Activated naive CD4-positive, alpha-beta T cell treated with anti-CD3 and anti-CD28 coated beads for 36 hours (primary cell): ENCODE measurements at regions of chr2 and their contacts with region 1.

Region 1: DNA sequence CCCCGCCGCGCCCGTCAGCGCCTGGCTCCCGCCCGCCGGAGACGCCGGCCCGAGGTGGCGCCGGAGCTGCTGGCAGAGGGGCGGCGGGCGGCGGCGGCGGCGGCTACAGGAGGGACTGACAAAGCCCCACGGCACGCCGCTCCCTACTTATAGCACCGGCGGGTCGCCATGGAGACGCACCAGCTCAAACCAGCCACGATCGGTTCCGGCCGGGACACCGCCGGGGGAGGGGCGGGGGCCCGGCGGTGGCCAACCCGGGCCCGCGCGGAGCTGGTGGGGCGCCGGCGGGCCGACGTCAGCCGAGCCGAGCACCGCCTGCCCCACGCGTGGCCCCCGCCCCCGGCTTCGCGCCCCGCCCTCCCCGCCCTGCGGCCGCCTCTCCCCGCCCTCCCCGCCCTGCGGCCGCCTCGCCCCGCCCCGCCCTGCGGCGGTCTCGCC is at the start of gene ODC1:
- DNase-seq: peak; percentile 89
- H3K4me3 Mint-ChIP-seq: peak within 1 kb of the TSS; percentile 85
- H3K27ac Mint-ChIP-seq: peak within 1 kb of the TSS; percentile 91
- H3K4me1 Mint-ChIP-seq: peaks cover 56% of the 10 kb centered on the region
- H3K27me3 Mint-ChIP-seq: no peaks in the 10 kb centered on the region
- total RNA-seq, gene ODC1: 174 to 177 TPM

Region 2: DNA sequence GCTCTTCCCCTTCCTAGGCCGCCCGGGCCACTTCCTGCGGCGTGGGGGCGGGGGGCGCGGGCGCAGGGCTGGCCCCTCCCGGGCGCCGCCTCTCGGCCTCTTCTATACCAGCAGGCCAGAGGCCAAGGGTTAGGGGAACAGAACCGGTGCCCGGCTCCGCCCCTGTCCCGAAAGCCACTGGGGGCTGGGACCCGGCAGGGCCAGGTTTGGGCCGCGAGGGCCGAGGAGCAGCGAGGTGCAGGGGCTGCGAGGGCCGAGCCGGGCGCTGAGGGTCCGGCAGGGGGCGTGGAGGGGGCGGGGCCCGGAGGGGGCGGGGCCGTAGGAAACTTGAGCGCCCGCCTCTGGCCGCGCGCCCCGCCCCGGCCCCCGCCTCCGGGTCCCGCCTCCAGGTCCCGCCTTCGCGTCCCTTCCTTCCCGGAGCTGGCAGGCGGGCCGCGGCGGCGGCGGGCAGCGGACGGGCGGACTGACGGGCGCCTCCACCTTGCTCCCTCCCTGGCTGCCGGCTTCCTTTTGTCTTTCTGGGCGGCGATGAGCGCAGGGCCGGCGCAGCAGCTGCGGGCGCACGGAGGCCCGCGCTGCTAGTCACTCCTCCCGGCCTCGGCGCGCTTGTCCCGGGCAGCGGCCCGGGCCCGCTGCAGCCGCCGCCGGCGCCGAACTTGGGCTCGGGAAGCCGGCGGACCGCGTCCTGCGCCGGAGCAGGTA is 145.6 kb before region 1 on chr2 and contains the start of gene HPCAL1:
- CTCF ChIA-PET with region 1: no interaction called
- intact Hi-C with region 1: loop called (anchors 1 kb)
- DNase-seq: peak; percentile 84
- H3K4me3 Mint-ChIP-seq: peak within 1 kb of the TSS; percentile 99
- H3K27ac Mint-ChIP-seq: peak within 1 kb of the TSS; percentile 83
- H3K4me1 Mint-ChIP-seq: peaks cover 71% of the 10 kb centered on the region
- H3K27me3 Mint-ChIP-seq: no peaks in the 10 kb centered on the region
- total RNA-seq, gene HPCAL1: 71.4 to 73.8 TPM

Region 3: GRCh38 chr2:10434886-10435819 is 13.1 kb before region 1 on chr2:
- CTCF ChIA-PET with region 1: interaction called, 15 read pairs
- intact Hi-C with region 1: no loop called
- DNase-seq: peak; percentile 69
- H3K4me3 Mint-ChIP-seq: no peak overlapping the region
- H3K27ac Mint-ChIP-seq: no peak overlapping the region
- H3K4me1 Mint-ChIP-seq: peaks cover 7% of the 10 kb centered on the region
- H3K27me3 Mint-ChIP-seq: peaks cover 9% of the 10 kb centered on the region

Region 4: GRCh38 chr2:10538224-10538894 is 90.1 kb after region 1 on chr2:
- CTCF ChIA-PET with region 1: no interaction called
- intact Hi-C with region 1: loop called (anchors 5 kb)
- DNase-seq: no peak
- H3K4me3 Mint-ChIP-seq: no peak overlapping the region
- H3K27ac Mint-ChIP-seq: no peak overlapping the region
- H3K4me1 Mint-ChIP-seq: peaks cover 3% of the 10 kb centered on the region
- H3K27me3 Mint-ChIP-seq: peaks cover 5% of the 10 kb centered on the region

Region 5: DNA sequence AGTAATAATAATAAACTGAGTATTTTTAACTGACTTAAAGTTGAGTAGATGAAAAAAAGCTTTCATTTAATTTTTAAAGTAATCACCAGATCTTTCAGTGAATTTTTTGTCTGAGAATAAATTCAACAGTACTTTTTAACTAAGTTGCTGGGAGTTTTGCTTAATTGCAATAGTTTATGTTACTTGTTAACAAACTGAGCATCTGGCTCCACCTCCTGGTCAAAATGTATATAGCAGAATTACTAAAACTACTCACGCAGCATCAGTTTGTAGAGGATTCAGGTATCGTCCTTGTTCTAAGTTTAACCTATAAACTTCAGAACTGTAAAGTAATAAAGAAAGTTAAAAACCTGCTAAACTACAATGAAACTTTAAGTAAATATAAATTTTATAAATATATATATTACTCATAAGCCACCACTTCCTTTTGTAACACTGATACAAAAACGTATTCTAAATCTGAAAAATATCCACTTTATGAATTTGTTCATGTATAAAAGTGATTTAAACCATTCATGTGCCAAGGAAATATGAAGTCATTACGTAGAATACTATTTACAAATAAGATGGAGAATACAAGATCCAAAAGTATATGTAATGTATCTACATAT is 220.3 kb after region 1 on chr2:
- CTCF ChIA-PET with region 1: no interaction called
- intact Hi-C with region 1: loop called (anchors 1 kb)
- DNase-seq: peak; percentile 26
- H3K4me3 Mint-ChIP-seq: no peak overlapping the region
- H3K27ac Mint-ChIP-seq: no peak overlapping the region
- H3K4me1 Mint-ChIP-seq: peaks cover 8% of the 10 kb centered on the region
- H3K27me3 Mint-ChIP-seq: no peaks in the 10 kb centered on the region